ENCODE measurements at regions of chr20 and their contacts with region 1.

Region 1: GRCh38 chr20:22795871-22796270 is 211.5 kb upstream of the FOXA2 start:
- DNase-seq: peak; percentile 93
- H3K4me3 Mint-ChIP-seq: no peak overlapping the region
- H3K27ac Mint-ChIP-seq: peak overlapping the region; percentile 5
- H3K4me1 Mint-ChIP-seq: peaks cover 48% of the 10 kb centered on the region
- H3K27me3 Mint-ChIP-seq: no peaks in the 10 kb centered on the region
- CTCF ChIP-seq: no peak

Region 2: GRCh38 chr20:22775671-22776139 is 20.2 kb before region 1 on chr20:
- CTCF ChIA-PET with region 1: interaction called, 15 read pairs
- POLR2A ChIA-PET with region 1: interaction called, 28 read pairs
- intact Hi-C with region 1: no loop called
- DNase-seq: peak; percentile 88
- H3K4me3 Mint-ChIP-seq: peak overlapping the region; percentile 45
- H3K27ac Mint-ChIP-seq: peak overlapping the region; percentile 72
- H3K4me1 Mint-ChIP-seq: peaks cover 59% of the 10 kb centered on the region
- H3K27me3 Mint-ChIP-seq: no peaks in the 10 kb centered on the region
- CTCF ChIP-seq: no peak

Region 3: DNA sequence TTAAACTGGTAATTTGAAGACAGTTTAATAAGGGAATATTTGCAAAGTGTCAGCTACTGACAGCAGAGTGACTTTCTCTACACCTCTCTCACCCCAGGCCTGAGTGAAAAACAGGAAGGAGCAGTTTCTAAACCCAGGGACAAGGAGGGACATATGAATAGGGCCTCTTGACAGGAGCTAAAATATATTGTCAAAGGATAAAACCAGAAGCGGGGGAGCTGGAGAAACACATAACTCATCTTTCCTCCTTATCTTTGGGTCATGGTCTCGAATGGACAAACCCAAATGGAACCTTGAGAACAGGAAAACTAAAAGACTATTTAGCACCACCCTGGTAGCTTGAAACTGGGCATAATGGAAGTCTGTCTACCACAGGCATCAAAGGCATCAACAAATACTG is 14.0 kb before region 1 on chr20:
- CTCF ChIA-PET with region 1: interaction called, 15 read pairs
- POLR2A ChIA-PET with region 1: interaction called, 28 read pairs
- intact Hi-C with region 1: no loop called
- DNase-seq: no peak
- H3K4me3 Mint-ChIP-seq: no peak overlapping the region
- H3K27ac Mint-ChIP-seq: no peak overlapping the region
- H3K4me1 Mint-ChIP-seq: peaks cover 8% of the 10 kb centered on the region
- H3K27me3 Mint-ChIP-seq: no peaks in the 10 kb centered on the region
- CTCF ChIP-seq: no peak